ENCODE measurements at regions of chr15 and their contacts with region 1.

Region 1: DNA sequence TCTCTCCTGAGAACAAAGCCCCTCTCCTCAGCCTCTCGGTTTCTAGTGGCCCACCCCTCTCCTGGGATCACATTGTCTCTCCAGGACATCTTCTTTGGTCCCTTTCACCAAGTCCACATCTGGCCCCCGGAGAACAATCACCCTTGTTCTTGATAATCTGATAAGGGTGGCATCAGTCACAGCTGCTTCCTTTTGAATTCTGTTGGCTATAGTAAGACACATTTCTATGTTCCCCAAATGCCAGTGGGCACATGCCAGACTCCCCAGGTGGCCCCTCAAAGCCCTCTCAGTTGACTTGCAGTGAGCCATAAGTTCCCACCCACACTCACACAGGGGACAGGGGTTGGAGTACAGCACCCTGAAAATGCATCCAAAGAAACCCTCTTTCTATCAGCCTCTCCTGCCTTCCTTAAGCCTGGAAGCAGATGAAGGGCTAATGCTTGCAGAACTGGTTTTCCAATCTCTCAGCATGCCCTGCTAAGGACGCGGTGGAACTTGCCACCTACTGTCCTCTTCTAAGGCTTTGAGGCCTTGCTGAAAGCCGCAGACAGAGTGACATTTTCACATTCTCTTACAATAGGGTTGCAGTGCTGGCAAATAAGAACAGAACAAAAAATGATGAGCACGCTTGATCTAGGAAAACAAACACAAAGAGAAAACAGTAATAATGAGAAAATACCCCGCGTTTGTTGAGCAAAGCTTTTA is 101.3 kb upstream of the SLCO3A1 start:
- DNase-seq: peak in 6 of 10 donors; percentile 7 to 74 (median 56)
- H3K4me3 ChIP-seq: no peak overlapping the region
- H3K27ac ChIP-seq: peak overlapping the region; percentile 21 to 97 (median 89)
- H3K27me3 ChIP-seq: peaks cover 0 to 7% (median 0%) of the 10 kb centered on the region in 45 donors
- CTCF ChIP-seq: peak in 1 of 56 donors; percentile 14

Region 2: GRCh38 chr15:91694831-91695210 is 57.4 kb before region 1 on chr15:
- intact Hi-C with region 1: no loop called
- DNase-seq: no peak
- H3K4me3 ChIP-seq: peak overlapping the region in 8 of 59 donors; percentile 0 to 34 (median 16)
- H3K27ac ChIP-seq: peak overlapping the region in 53 of 59 donors; percentile 0 to 83 (median 62)
- H3K27me3 ChIP-seq: no peaks in the 10 kb centered on the region
- CTCF ChIP-seq: no peak

Region 3: DNA sequence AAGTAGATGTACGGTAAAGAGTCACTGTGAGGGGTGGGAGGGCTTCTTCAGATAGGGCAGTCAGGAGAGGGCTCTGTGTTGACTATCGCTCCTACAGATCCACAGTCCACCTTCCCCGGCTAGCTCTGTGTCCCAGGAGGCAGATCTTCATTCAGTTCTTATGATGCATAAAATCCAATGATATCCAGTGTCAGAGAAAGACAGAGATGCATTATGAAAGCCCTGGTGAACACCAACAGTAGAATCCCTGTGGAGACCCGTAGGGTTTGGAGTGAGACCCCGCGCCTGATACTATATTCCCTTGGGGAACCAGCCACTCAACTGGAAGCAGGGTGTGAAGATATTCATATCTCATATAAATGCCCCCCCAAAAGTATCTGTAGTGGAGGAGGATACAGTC is 18.6 kb before region 1 on chr15:
- intact Hi-C with region 1: loop called in 1 of 2 experiments (anchors 2 kb)
- DNase-seq: no peak
- H3K4me3 ChIP-seq: no peak overlapping the region
- H3K27ac ChIP-seq: peak overlapping the region in 5 of 59 donors; percentile 10 to 63 (median 33)
- H3K27me3 ChIP-seq: peaks cover 0 to 21% (median 0%) of the 10 kb centered on the region in 45 donors
- CTCF ChIP-seq: no peak

Measured in dorsolateral prefrontal cortex (tissue), 120 donors.